AG04449 (cell line): ENCODE measurements at regions of chr14 and their contacts with region 1.

Region 1: DNA sequence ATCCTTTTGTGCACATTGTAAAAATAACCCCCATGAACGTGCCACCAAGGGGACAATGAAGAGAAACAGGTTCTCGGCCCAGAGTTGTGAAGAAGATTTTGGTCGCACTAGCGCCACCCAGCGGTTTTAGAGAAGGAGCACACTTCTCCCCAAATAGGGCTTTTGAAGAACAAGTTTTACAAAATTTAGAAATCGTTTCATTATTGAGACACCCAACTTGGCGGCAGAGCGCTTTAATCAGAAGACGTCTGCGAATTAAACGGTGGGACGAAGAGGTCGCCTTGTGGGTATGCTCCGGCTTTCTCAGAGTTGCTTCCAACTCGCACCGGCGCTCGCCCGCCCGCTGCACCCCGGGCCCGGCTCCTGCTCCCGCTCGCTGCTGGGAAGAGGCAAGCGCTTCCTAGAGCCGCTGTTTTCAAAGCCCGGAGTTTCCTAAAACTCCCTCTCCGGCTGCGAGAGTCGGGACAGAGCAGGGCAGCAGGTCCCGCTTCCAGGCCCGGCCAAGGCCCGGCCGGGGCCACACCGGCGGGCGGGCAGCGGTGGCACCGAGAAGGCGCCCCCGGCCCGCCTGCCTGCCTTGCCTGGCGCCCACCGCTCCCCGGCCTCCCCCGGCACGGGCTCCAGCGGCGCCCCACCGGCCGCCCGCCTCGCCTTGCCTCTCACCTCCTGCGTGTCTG is 673 bp downstream of the FOXA1 start:
- DNase-seq: peak; percentile 9
- H3K4me3 ChIP-seq: peak overlapping the region; percentile 63
- CTCF ChIP-seq: peak; percentile 67

Region 2: GRCh38 chr14:37403626-37404025 is 190.8 kb before region 1 on chr14:
- CTCF ChIA-PET with region 1: no interaction called
- POLR2A ChIA-PET with region 1: no interaction called
- DNase-seq: no peak
- H3K4me3 ChIP-seq: no peak overlapping the region
- CTCF ChIP-seq: no peak

Region 3: GRCh38 chr14:37583359-37584231 is 10.8 kb before region 1 on chr14:
- CTCF ChIA-PET with region 1: interaction called, 12 read pairs
- POLR2A ChIA-PET with region 1: no interaction called
- DNase-seq: no peak
- H3K4me3 ChIP-seq: no peak overlapping the region
- CTCF ChIP-seq: no peak

Region 4: DNA sequence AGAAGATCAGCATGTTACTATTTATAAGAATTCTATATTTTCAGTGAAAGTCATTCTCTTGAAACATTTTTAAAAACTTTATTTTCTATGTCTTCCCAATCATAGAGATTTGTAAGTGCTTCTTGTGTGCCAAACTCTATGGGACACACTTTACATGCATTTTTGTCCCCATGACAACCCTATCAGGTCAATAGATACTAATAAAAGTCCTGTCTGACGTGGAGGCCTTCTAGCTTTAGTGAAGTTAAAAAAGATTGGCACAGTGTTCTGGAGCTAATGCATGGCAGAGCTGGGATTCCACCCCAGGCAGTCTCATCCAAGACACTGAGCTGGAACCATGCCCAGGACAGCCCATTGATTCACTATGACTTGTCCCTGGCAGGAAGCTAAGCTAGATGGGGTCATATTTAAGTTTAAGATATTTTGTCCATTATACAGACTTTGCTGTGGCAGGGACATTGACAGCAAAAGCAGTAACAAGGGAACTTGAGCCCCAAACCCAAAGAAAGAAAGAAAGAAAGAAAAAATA is 29.1 kb after region 1 on chr14:
- CTCF ChIA-PET with region 1: interaction called, 12 read pairs
- POLR2A ChIA-PET with region 1: no interaction called
- DNase-seq: peak; percentile 36
- H3K4me3 ChIP-seq: no peak overlapping the region
- CTCF ChIP-seq: no peak